ENCODE measurements at regions of chr21 and their contacts with region 1.

Region 1: GRCh38 chr21:36989699-36990507 is 16.6 kb upstream of the RIPPLY3 start:
- DNase-seq: peak; percentile 95
- H3K4me3 ChIP-seq: peak overlapping the region in 2 of 3 donors; percentile 36 to 65
- H3K27ac ChIP-seq: peak overlapping the region; percentile 88 to 97 (median 96)
- H3K4me1 ChIP-seq: peaks cover 0 to 5% of the 10 kb centered on the region in 2 donors
- H3K27me3 ChIP-seq: no peaks in the 10 kb centered on the region
- CTCF ChIP-seq: peak; percentile 21 to 98 (median 82)
- POLR2A ChIP-seq: peak in 1 of 2 donors; percentile 57

Region 2: GRCh38 chr21:36966066-36966820 is 23.7 kb before region 1 on chr21 and contains the start of gene HLCS:
- intact Hi-C with region 1: loop called (anchors 2 kb)
- DNase-seq: peak; percentile 71 to 72
- H3K4me3 ChIP-seq: peak within 1 kb of the TSS; percentile 56 to 86 (median 64)
- H3K27ac ChIP-seq: peak within 1 kb of the TSS; percentile 86 to 89 (median 88)
- H3K4me1 ChIP-seq: peaks cover 8 to 14% of the 10 kb centered on the region in 2 donors
- H3K27me3 ChIP-seq: no peaks in the 10 kb centered on the region
- CTCF ChIP-seq: peak in 2 of 6 experiments; percentile 21 to 39
- POLR2A ChIP-seq: peak in 1 of 2 donors; percentile 72
- total RNA-seq, gene HLCS: 34.2 to 70.7 (median 43.4) TPM